Mammary epithelial cell (primary cell): ENCODE measurements at regions of chr10 and their contacts with region 1.

Region 1: GRCh38 chr10:5623081-5623748 is 43.2 kb downstream of the ASB13 start:
- DNase-seq: peak; percentile 79
- H3K4me3 ChIP-seq: no peak overlapping the region
- H3K27ac ChIP-seq: peak overlapping the region; percentile 64
- H3K4me1 ChIP-seq: peaks cover 22% of the 10 kb centered on the region
- H3K27me3 ChIP-seq: no peaks in the 10 kb centered on the region
- CTCF ChIP-seq: peak; percentile 95 to 96

Region 2: DNA sequence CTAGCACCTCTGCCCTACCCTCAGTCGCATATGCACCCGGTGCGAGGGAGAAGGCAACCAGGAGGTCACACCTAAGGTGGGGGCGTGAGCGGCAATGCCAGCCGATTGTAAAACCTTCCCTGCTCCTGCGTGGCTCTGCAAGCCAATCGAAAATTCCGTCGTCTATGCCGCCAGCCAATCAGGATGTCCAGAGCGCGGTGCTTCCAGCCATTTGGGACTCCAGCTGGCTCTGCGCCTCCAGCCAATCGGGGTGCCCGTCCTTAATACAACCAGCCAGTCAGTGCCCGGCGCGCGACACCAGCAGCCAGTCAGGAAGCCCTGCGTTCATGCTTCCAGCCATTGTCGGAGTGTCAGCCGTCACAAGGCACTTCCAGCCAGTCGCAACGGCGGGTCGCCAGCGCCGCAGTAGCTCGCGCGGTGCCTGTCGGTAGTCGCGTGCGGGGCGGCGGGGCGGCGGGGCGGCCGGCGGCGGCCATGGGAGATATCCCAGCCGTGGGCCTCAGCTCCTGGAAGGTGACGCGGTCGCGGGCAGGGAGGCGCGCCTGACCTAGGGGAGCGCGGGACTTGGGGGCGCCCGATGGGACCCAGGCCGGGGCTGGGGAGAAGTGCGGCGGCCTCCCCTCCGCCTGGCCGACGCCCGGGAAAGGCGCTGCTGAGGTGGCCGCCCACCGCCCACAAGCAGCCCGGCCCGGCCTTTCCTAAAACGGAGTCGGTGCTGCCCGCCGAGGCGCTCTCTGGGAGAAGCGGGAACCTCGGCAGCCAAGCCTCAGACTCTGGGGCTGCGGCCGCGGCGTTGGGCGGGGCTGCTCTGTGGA is 797.2 kb before region 1 on chr10 and contains the start of gene AKR1E2:
- CTCF ChIA-PET with region 1: no interaction called
- dilution Hi-C with region 1: no loop called
- in situ Hi-C with region 1: loop called in 1 of 2 experiments (anchors 25 kb)
- intact Hi-C with region 1: loop called (anchors 10 kb)
- DNase-seq: peak; percentile 81
- H3K4me3 ChIP-seq: peak within 1 kb of the TSS in 2 of 3 experiments; percentile 12 to 32
- H3K27ac ChIP-seq: no peak within 1 kb of the TSS
- H3K4me1 ChIP-seq: no peaks in the 10 kb centered on the region
- H3K27me3 ChIP-seq: no peaks in the 10 kb centered on the region
- CTCF ChIP-seq: no peak
- total RNA-seq, gene AKR1E2: 9.8 to 20.5 TPM

Region 3: DNA sequence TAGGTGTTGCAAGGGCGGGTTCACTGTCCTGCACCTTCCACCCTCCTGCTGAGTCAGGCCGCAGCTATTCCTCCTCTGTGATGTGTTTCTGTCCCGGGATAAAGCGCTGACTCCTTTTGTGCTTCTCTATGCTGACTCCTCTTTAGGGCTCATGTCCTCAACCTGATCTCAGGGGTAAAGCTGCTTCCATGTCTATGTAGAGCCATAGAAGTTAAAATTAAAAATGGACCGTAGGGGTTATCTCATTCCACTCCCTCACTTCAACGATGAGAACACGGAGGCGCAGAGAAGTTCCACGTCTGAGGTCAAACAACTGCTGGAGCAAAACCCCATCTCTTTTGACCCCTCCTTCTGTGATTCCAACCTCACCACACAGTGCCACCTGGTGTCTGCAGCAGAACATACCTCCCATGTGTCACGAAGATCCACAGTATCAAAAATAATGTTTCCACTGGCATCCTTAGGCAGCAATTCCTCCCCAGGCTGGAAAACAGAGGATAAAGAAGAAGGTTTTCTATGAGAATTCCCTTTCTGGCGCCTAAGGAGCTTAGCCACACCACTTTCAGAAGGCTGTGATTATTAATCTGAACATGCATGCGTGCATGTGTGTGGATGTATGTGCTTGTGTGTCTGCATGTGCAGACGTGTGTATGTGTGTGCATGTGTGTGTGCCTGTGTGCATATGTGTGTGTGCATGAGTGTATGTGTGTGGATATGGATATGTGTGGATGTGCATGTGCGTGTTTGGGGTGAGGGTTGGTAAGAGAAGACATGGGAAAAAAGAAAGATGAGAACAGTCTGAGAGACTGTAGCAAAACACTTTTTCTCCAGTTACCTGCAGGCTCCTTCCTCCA is 339.7 kb before region 1 on chr10:
- CTCF ChIA-PET with region 1: no interaction called
- dilution Hi-C with region 1: no loop called
- in situ Hi-C with region 1: loop called in 1 of 2 experiments (anchors 25 kb)
- intact Hi-C with region 1: loop called (anchors 10 kb)
- DNase-seq: peak; percentile 64
- H3K4me3 ChIP-seq: no peak overlapping the region
- H3K27ac ChIP-seq: no peak overlapping the region
- H3K4me1 ChIP-seq: peaks cover 9% of the 10 kb centered on the region
- H3K27me3 ChIP-seq: no peaks in the 10 kb centered on the region
- CTCF ChIP-seq: peak; percentile 71 to 85

Region 4: DNA sequence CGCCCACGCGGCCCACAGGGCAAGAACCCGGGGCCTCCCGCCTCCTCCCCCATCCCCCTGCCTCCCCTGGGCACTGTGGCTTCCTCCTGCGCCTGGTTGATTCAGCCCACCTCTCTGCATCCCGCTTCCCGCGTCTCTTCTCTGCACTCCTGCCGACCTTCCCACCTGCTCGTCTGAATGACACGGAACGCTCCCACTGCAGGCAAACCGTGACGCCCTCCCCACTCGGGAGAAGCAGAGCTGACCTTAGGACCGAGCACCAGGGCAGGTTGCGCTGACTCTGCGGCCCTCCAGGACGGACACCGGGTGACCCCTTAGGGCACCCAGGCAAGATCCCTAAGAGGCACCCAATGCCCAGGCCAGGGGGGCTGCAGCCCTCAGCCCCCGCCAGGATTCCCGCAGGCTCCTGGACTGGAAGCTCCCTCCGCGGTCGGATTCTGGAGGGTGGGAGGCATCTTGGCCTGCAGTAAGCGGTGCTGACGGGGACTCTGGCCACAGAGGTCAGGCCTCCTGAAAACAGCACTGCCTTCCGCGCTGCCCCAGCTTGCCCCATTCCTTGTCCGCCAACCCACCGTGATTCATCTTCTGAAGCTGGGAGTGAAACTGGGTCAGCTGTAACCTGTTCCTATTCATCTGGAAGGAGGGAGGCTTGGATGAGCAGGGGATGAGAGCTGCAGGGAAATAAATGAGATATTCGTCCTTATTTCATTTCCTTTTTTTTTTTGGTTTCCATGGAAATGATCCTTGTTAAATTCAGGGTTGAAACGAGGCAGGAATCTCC is 97.5 kb before region 1 on chr10:
- CTCF ChIA-PET with region 1: interaction called, 4 read pairs
- dilution Hi-C with region 1: no loop called
- in situ Hi-C with region 1: loop called in 1 of 2 experiments (anchors 10 kb)
- intact Hi-C with region 1: loop called (anchors 1 kb)
- DNase-seq: peak; percentile 90
- H3K4me3 ChIP-seq: peak overlapping the region; percentile 6 to 46 (median 43)
- H3K27ac ChIP-seq: peak overlapping the region; percentile 69
- H3K4me1 ChIP-seq: peaks cover 29% of the 10 kb centered on the region
- H3K27me3 ChIP-seq: no peaks in the 10 kb centered on the region
- CTCF ChIP-seq: no peak

Region 5: GRCh38 chr10:5565671-5566577 is 57.3 kb before region 1 on chr10:
- CTCF ChIA-PET with region 1: no interaction called
- dilution Hi-C with region 1: no loop called
- in situ Hi-C with region 1: no loop called
- intact Hi-C with region 1: loop called (anchors 1 kb)
- DNase-seq: peak; percentile 100
- H3K4me3 ChIP-seq: no peak overlapping the region
- H3K27ac ChIP-seq: peak overlapping the region; percentile 100
- H3K4me1 ChIP-seq: peaks cover 44% of the 10 kb centered on the region
- H3K27me3 ChIP-seq: no peaks in the 10 kb centered on the region
- CTCF ChIP-seq: no peak

Region 6: DNA sequence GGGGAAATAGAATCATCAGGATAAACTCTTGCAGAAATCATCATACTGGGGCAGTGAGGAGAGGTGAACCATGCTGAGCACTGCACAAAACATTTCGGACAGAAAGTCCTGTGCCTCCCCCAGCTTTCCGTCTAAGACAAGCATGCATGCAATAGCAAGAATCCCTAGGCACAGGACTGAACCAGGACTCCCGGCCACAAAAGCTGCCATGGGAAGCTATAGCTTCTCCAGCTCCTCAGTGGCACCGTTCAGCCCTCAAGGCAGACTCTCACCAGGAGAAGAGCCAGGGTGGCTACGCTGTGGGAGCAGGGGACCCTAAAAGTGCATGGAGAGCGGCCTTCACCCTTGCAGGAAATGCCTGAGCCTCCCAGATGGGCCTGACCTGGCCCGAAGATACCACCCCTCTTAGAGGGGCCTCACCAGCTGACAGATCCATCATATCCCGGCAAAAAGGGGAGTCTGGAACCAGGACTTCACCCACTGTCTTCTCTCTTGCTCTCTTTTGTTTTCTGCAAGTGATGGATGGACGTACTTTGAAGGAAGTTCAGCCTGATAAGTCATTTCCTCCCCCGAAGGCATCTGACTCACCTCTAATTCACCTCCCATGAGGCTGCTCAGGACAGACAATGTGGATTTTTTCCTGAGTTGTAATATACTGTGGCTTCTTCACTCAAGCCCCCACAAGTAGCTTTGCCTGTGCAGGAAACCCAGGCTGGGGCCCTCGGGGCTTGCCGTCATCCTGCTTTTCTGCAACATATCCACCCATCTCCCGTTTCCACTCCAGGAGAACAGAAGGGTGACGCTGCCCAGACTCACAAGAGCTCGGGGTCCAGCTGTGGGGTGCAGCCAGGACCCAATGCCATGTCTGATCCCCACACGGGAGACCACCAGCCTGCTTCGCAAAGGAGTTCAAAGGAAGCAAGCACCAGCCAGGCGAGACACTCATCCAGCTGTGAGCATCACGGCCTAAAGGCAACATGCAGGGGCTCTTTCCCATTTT is 27.3 kb before region 1 on chr10:
- CTCF ChIA-PET with region 1: no interaction called
- dilution Hi-C with region 1: no loop called
- in situ Hi-C with region 1: no loop called
- intact Hi-C with region 1: loop called (anchors 2 kb)
- DNase-seq: peak; percentile 99
- H3K4me3 ChIP-seq: peak overlapping the region; percentile 12 to 36 (median 30)
- H3K27ac ChIP-seq: peak overlapping the region; percentile 90
- H3K4me1 ChIP-seq: peaks cover 31% of the 10 kb centered on the region
- H3K27me3 ChIP-seq: no peaks in the 10 kb centered on the region
- CTCF ChIP-seq: no peak

Region 7: GRCh38 chr10:5606864-5607263 is 16.4 kb before region 1 on chr10:
- CTCF ChIA-PET with region 1: no interaction called
- dilution Hi-C with region 1: no loop called
- in situ Hi-C with region 1: no loop called
- intact Hi-C with region 1: no loop called
- DNase-seq: no peak
- H3K4me3 ChIP-seq: no peak overlapping the region
- H3K27ac ChIP-seq: no peak overlapping the region
- H3K4me1 ChIP-seq: peaks cover 33% of the 10 kb centered on the region
- H3K27me3 ChIP-seq: no peaks in the 10 kb centered on the region
- CTCF ChIP-seq: no peak

Region 8: DNA sequence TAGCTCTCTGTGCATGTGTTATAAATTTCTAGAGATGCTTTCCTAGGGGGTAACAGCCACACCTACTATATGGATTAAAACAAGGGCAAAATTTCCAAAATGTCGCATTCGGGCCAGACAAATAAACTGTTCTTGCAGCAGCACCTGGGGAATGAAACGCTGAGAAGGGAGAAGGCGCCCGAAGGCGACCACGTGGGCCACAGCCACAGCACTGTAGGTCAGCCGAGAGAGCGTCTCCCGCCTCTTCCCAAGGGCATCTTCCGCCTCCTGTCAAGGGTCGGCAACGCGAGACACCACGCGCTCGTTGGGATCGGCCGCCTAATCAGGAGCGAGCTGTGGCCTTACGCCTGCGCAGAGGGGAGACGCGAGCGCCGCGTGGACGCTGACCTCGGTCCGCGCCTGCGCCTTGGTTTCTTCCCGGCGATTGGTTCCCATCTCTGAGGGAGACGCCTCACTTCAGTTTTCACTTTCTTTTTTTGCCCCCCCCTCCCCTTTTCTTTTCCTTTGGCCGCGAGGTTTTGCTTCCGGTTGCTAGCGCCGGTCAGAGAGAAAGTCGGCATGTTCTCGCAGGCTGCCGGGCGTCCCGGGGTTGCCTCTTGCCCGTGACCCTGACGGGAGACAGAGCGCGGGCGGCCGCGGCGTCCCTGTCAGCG is 61.2 kb after region 1 on chr10 and contains the start of gene TASOR2:
- CTCF ChIA-PET with region 1: no interaction called
- dilution Hi-C with region 1: no loop called
- in situ Hi-C with region 1: no loop called
- intact Hi-C with region 1: no loop called
- DNase-seq: peak; percentile 98
- H3K4me3 ChIP-seq: peak within 1 kb of the TSS; percentile 76 to 91 (median 81)
- H3K27ac ChIP-seq: peak within 1 kb of the TSS; percentile 64
- H3K4me1 ChIP-seq: peaks cover 5% of the 10 kb centered on the region
- H3K27me3 ChIP-seq: no peaks in the 10 kb centered on the region
- CTCF ChIP-seq: no peak
- total RNA-seq, gene TASOR2: 73.1 to 82.0 TPM